Naive thymus-derived CD4-positive, alpha-beta T cell (primary cell): ENCODE measurements at regions of chr1 and their contacts with region 1.

Region 1: DNA sequence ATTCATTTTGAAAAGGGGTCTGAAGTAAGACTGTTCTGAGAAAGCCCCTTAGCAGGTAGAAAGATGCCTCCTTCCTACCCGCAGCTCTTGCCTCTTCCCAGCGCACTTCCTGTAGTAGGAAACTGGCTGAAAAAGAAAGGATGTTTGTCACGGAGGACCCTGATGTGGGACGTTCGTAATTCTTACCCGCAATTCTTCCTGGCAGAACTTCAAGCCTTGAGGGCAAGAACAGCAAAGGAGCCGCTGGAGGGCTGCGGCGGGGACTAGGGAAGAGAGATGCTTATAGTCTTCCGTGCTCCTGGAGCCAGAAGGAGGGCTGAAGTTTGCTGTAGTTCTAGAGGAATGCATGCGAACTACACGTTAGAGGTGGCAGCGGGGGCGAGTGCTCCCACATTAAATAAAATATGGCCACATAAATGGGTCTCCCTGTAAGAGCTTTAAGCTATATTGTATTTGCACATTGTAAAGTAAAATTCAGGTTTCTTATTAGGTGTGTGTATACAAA is 6.3 kb downstream of the C1orf53 start:
- DNase-seq: peak in 1 of 9 donors; percentile 1
- ATAC-seq: no peak
- H3K4me3 ChIP-seq: no peak overlapping the region
- H3K4me3 Mint-ChIP-seq: peak overlapping the region in 7 of 10 donors; percentile 13 to 60 (median 37)
- H3K27ac ChIP-seq: no peak overlapping the region
- H3K27ac Mint-ChIP-seq: peak overlapping the region in 1 of 9 donors; percentile 63
- H3K4me1 ChIP-seq: peaks cover 37 to 52% of the 10 kb centered on the region in 2 donors
- H3K4me1 Mint-ChIP-seq: peaks cover 37 to 54% (median 49%) of the 10 kb centered on the region in 7 donors
- H3K27me3 ChIP-seq: peaks cover 22 to 58% of the 10 kb centered on the region in 2 donors
- H3K27me3 Mint-ChIP-seq: peaks cover 87 to 96% (median 88%) of the 10 kb centered on the region in 5 donors

Region 2: DNA sequence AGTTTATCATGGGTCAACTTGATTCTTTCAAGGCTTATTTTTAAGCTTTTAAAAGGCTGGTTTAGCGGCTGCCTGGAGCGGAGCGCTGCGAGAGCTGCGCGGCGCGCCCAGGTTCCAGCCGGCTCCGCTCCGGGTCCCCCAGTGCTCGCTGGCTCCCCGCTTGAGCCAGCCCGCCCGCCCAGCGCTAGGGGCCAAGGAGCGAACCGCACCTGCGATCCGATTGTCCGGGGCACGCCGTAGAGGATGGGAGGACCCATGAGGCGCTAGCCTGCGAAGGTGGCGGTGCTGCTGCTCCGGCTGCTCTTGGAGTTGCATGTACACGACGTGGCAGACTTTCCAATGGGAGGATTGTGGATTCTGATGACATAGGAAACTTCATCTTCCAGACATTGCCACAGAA is 1030.8 kb before region 1 on chr1:
- CTCF ChIA-PET with region 1: no interaction called
- POLR2A ChIA-PET with region 1: no interaction called
- intact Hi-C with region 1: no loop called
- DNase-seq: no peak
- ATAC-seq: no peak
- H3K4me3 ChIP-seq: no peak overlapping the region
- H3K4me3 Mint-ChIP-seq: no peak overlapping the region
- H3K27ac ChIP-seq: no peak overlapping the region
- H3K27ac Mint-ChIP-seq: no peak overlapping the region
- H3K4me1 ChIP-seq: no peaks in the 10 kb centered on the region
- H3K4me1 Mint-ChIP-seq: no peaks in the 10 kb centered on the region
- H3K27me3 ChIP-seq: no peaks in the 10 kb centered on the region
- H3K27me3 Mint-ChIP-seq: peaks cover 2 to 19% (median 10%) of the 10 kb centered on the region in 5 donors

Region 3: DNA sequence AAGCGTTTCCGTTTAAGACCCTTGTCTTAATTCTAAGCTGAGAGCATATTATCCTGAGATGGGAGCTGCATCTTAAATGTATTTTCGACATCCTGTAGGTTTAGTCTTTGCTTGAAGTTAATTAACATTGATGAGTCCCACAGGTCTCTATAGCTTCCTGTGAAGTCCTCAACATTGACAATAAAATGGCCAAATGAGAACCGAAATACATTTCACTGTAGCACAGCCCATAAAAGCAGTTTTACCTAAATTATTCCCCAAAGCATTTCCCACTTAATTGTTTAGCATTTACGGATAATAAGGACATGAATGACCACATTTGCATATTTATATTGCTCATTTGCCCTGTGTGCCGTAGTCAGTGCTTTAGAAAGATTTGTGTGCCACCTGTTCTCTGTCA is 524.3 kb before region 1 on chr1:
- CTCF ChIA-PET with region 1: no interaction called
- POLR2A ChIA-PET with region 1: no interaction called
- intact Hi-C with region 1: no loop called
- DNase-seq: no peak
- ATAC-seq: no peak
- H3K4me3 ChIP-seq: no peak overlapping the region
- H3K4me3 Mint-ChIP-seq: no peak overlapping the region
- H3K27ac ChIP-seq: no peak overlapping the region
- H3K27ac Mint-ChIP-seq: no peak overlapping the region
- H3K4me1 ChIP-seq: peaks cover 0 to 2% of the 10 kb centered on the region in 2 donors
- H3K4me1 Mint-ChIP-seq: peaks cover 0 to 9% (median 3%) of the 10 kb centered on the region in 7 donors
- H3K27me3 ChIP-seq: no peaks in the 10 kb centered on the region
- H3K27me3 Mint-ChIP-seq: peaks cover 0 to 18% (median 0%) of the 10 kb centered on the region in 5 donors

Region 4: GRCh38 chr1:198175423-198176170 is 266.8 kb after region 1 on chr1:
- CTCF ChIA-PET with region 1: no interaction called
- POLR2A ChIA-PET with region 1: no interaction called
- intact Hi-C with region 1: loop called in 1 of 2 experiments (anchors 5 kb)
- DNase-seq: peak in 7 of 9 donors; percentile 29 to 63 (median 51)
- ATAC-seq: peak; percentile 80
- H3K4me3 ChIP-seq: peak overlapping the region; percentile 8
- H3K4me3 Mint-ChIP-seq: peak overlapping the region; percentile 32 to 85 (median 67)
- H3K27ac ChIP-seq: peak overlapping the region; percentile 59
- H3K27ac Mint-ChIP-seq: peak overlapping the region; percentile 19 to 97 (median 93)
- H3K4me1 ChIP-seq: peaks cover 80 to 83% of the 10 kb centered on the region in 2 donors
- H3K4me1 Mint-ChIP-seq: peaks cover 64 to 91% (median 84%) of the 10 kb centered on the region in 7 donors
- H3K27me3 ChIP-seq: no peaks in the 10 kb centered on the region
- H3K27me3 Mint-ChIP-seq: no peaks in the 10 kb centered on the region